T-cell (primary cell): ENCODE measurements at regions of chr21 and their contacts with region 1.

Region 1: DNA sequence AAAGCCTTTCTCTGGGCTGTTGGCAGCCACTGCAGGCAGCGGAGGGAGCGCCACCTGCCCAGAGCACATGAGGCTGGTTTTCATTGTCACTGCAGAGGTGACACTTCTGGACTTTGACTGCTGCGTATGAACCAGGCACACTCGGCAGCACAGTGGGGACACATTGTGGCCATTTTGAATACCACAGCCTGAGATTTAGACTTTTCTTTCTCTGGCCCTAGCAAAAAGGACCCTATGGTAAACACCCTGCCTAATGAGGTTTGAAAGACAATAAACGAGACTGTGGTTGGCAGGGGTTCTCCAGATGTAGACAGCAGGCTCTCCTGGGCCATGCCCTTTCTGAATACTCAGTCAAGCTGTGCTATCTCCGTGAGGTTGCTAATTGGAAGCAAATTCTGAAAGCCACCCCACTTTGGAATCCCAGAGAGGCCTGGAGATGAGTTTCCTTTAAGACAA is 12.0 kb upstream of the KCNE2 start:
- DNase-seq: peak in 6 of 35 experiments; percentile 2 to 45 (median 8)
- ATAC-seq: peak in 3 of 4 experiments; percentile 20 to 61 (median 36)
- H3K4me3 ChIP-seq: no peak overlapping the region
- H3K4me3 Mint-ChIP-seq: no peak overlapping the region
- H3K27ac ChIP-seq: no peak overlapping the region
- H3K27ac Mint-ChIP-seq: no peak overlapping the region
- H3K4me1 ChIP-seq: no peaks in the 10 kb centered on the region
- H3K4me1 Mint-ChIP-seq: peaks cover 0 to 8% (median 4%) of the 10 kb centered on the region in 3 donors
- H3K27me3 ChIP-seq: peaks cover 0 to 14% of the 10 kb centered on the region in 2 experiments
- H3K27me3 Mint-ChIP-seq: peaks cover 17 to 26% of the 10 kb centered on the region in 2 donors

Region 2: DNA sequence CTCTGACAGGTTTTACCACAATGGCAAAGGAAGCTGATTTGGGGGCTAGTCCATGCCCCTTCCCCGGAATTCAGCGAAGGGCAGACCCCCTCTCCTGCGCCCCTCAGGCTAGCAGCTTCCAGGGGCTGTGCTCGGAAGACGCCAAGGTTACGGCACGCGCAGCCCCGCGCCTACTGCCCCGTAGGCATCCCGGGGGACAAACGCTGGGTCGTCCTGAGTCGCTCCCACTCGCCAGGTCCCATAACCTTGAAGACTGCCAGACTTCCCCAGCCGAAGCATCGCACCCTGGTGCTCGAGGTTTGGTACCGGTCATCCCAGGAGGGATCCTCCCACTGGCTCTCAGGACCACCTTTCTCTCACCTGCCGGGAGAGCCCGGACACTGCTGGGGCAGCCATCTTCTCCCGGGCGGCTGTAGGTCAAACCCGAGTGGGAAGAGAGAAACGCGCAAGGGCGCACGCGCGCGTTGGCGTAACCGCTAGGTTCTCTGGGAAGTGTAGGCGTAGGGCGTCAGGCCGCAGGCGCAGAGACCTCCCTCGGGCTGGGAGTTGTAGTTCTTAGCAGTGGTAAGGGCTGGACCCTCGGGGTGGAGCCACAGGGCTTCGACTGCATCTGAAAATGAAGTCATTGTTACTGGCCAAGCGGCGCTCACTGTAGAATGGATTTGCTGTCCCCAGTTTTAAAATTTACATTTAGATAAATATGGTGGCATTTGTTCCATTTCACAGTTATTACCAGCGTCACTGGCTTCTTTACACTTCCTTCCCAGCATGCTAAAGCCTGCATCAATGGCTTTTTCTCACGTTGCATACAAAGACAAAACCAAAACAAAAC is 436.2 kb before region 1 on chr21 and contains the start of gene ATP5PO:
- CTCF ChIA-PET with region 1: interaction called in 1 of 2 experiments, 15 read pairs
- POLR2A ChIA-PET with region 1: no interaction called
- DNase-seq: peak; percentile 88 to 97 (median 93)
- ATAC-seq: peak; percentile 99 to 100 (median 100)
- H3K4me3 ChIP-seq: peak within 1 kb of the TSS; percentile 75 to 92
- H3K4me3 Mint-ChIP-seq: peak within 1 kb of the TSS; percentile 98 to 99 (median 98)
- H3K27ac ChIP-seq: peak within 1 kb of the TSS; percentile 69
- H3K27ac Mint-ChIP-seq: peak within 1 kb of the TSS; percentile 93 to 95
- H3K4me1 ChIP-seq: peaks cover 7 to 18% of the 10 kb centered on the region in 2 experiments
- H3K4me1 Mint-ChIP-seq: peaks cover 27 to 36% (median 34%) of the 10 kb centered on the region in 3 donors
- H3K27me3 ChIP-seq: no peaks in the 10 kb centered on the region
- H3K27me3 Mint-ChIP-seq: no peaks in the 10 kb centered on the region
- total RNA-seq, gene ATP5PO: 125 to 138 (median 137) TPM

Region 3: GRCh38 chr21:33947451-33948095 is 404.2 kb before region 1 on chr21:
- CTCF ChIA-PET with region 1: interaction called in 1 of 2 experiments, 10 read pairs
- POLR2A ChIA-PET with region 1: no interaction called
- DNase-seq: peak; percentile 67 to 94 (median 81)
- ATAC-seq: peak; percentile 65 to 70 (median 70)
- H3K4me3 ChIP-seq: peak overlapping the region; percentile 2 to 35
- H3K4me3 Mint-ChIP-seq: peak overlapping the region; percentile 74 to 80 (median 76)
- H3K27ac ChIP-seq: peak overlapping the region; percentile 99
- H3K27ac Mint-ChIP-seq: peak overlapping the region; percentile 99
- H3K4me1 ChIP-seq: peaks cover 45 to 74% of the 10 kb centered on the region in 2 experiments
- H3K4me1 Mint-ChIP-seq: peaks cover 73 to 88% (median 85%) of the 10 kb centered on the region in 3 donors
- H3K27me3 ChIP-seq: no peaks in the 10 kb centered on the region
- H3K27me3 Mint-ChIP-seq: no peaks in the 10 kb centered on the region

Region 4: GRCh38 chr21:34362136-34362444 is 10.3 kb after region 1 on chr21:
- CTCF ChIA-PET with region 1: interaction called, 5 to 11 read pairs
- POLR2A ChIA-PET with region 1: interaction called in 1 of 2 experiments, 4 read pairs
- DNase-seq: no peak
- ATAC-seq: peak in 3 of 4 experiments; percentile 17 to 35 (median 33)
- H3K4me3 ChIP-seq: no peak overlapping the region
- H3K4me3 Mint-ChIP-seq: peak overlapping the region in 1 of 3 donors; percentile 15
- H3K27ac ChIP-seq: no peak overlapping the region
- H3K27ac Mint-ChIP-seq: no peak overlapping the region
- H3K4me1 ChIP-seq: peaks cover 0 to 3% of the 10 kb centered on the region in 2 experiments
- H3K4me1 Mint-ChIP-seq: peaks cover 5 to 8% (median 6%) of the 10 kb centered on the region in 3 donors
- H3K27me3 ChIP-seq: peaks cover 0 to 15% of the 10 kb centered on the region in 2 experiments
- H3K27me3 Mint-ChIP-seq: peaks cover 7 to 16% of the 10 kb centered on the region in 2 donors

Region 5: GRCh38 chr21:36163750-36164741 is 1812.2 kb after region 1 on chr21:
- CTCF ChIA-PET with region 1: no interaction called
- POLR2A ChIA-PET with region 1: no interaction called
- DNase-seq: no peak
- ATAC-seq: no peak
- H3K4me3 ChIP-seq: no peak overlapping the region
- H3K4me3 Mint-ChIP-seq: no peak overlapping the region
- H3K27ac ChIP-seq: no peak overlapping the region
- H3K27ac Mint-ChIP-seq: no peak overlapping the region
- H3K4me1 ChIP-seq: peaks cover 0 to 3% of the 10 kb centered on the region in 2 experiments
- H3K4me1 Mint-ChIP-seq: peaks cover 18 to 31% (median 20%) of the 10 kb centered on the region in 3 donors
- H3K27me3 ChIP-seq: no peaks in the 10 kb centered on the region
- H3K27me3 Mint-ChIP-seq: no peaks in the 10 kb centered on the region